B cell (primary cell): ENCODE measurements at regions of chr20 and their contacts with region 1.

Region 1: GRCh38 chr20:57622579-57623377 is 2.6 kb upstream of the ZBP1 start:
- DNase-seq: peak; percentile 69
- ATAC-seq: no peak
- H3K4me3 ChIP-seq: no peak overlapping the region
- H3K4me3 Mint-ChIP-seq: peak overlapping the region; percentile 13
- H3K27ac ChIP-seq: no peak overlapping the region
- H3K27ac Mint-ChIP-seq: peak overlapping the region; percentile 80
- H3K4me1 ChIP-seq: peaks cover 54 to 59% of the 10 kb centered on the region in 2 donors
- H3K4me1 Mint-ChIP-seq: peaks cover 65% of the 10 kb centered on the region
- H3K27me3 ChIP-seq: no peaks in the 10 kb centered on the region
- H3K27me3 Mint-ChIP-seq: no peaks in the 10 kb centered on the region
- CTCF ChIP-seq: peak; percentile 82

Region 2: GRCh38 chr20:57526885-57527458 is 95.8 kb before region 1 on chr20:
- CTCF ChIA-PET with region 1: no interaction called
- POLR2A ChIA-PET with region 1: no interaction called
- intact Hi-C with region 1: no loop called
- DNase-seq: no peak
- ATAC-seq: no peak
- H3K4me3 ChIP-seq: no peak overlapping the region
- H3K4me3 Mint-ChIP-seq: no peak overlapping the region
- H3K27ac ChIP-seq: no peak overlapping the region
- H3K27ac Mint-ChIP-seq: no peak overlapping the region
- H3K4me1 ChIP-seq: no peaks in the 10 kb centered on the region
- H3K4me1 Mint-ChIP-seq: no peaks in the 10 kb centered on the region
- H3K27me3 ChIP-seq: no peaks in the 10 kb centered on the region
- H3K27me3 Mint-ChIP-seq: peaks cover 3% of the 10 kb centered on the region
- CTCF ChIP-seq: no peak

Region 3: GRCh38 chr20:57611586-57612311 is 11.0 kb before region 1 on chr20:
- CTCF ChIA-PET with region 1: interaction called, 22 read pairs
- POLR2A ChIA-PET with region 1: interaction called, 3 read pairs
- intact Hi-C with region 1: no loop called
- DNase-seq: no peak
- ATAC-seq: no peak
- H3K4me3 ChIP-seq: no peak overlapping the region
- H3K4me3 Mint-ChIP-seq: no peak overlapping the region
- H3K27ac ChIP-seq: no peak overlapping the region
- H3K27ac Mint-ChIP-seq: no peak overlapping the region
- H3K4me1 ChIP-seq: peaks cover 5 to 15% of the 10 kb centered on the region in 2 donors
- H3K4me1 Mint-ChIP-seq: peaks cover 17% of the 10 kb centered on the region
- H3K27me3 ChIP-seq: no peaks in the 10 kb centered on the region
- H3K27me3 Mint-ChIP-seq: no peaks in the 10 kb centered on the region
- CTCF ChIP-seq: no peak

Region 4: DNA sequence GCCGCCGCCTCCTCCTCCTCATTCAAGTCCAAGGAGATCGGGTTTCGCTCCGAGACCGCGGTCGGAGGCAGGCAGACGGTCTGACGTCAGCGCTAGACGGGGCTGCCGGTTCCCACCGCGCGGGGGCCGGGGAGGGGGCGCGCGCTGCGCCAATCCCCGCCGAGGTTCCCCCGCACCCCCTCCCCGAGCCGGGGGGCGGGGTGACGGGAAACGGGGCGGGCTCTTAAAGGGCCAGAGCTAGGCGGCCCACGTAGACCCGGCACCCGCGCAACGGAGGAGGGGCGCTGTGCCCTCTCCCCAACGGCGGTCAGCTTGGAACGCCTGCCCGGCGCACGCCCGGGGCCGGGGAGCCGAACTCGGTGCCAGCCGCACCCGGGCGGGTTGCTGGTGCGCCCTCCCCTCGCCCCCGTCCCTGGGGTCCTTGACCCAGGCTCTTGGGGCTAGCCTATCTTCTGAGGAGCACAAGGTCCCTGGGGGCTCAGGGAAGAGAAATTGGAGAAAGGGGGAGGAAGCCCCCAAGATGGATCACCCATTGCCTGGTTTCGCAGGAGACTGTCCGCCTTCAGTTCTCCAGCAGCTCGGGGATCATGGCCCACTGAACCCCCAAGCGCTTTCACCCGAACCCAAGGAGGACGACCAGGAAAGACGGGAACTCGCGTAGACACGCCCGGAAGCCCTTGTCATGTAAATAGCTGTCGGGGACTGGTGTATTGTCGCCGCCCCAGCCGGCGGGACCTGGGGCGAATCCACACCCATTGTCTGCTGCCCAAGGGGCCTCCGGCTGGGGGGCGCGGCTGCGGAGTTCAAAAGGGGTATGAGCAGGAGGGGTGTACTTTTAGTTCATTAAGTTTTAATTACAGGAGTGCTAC is 87.4 kb after region 1 on chr20 and contains the start of gene PMEPA1:
- CTCF ChIA-PET with region 1: interaction called, 6 read pairs
- POLR2A ChIA-PET with region 1: interaction called, 6 read pairs
- intact Hi-C with region 1: loop called (anchors 1 kb)
- DNase-seq: peak; percentile 97
- ATAC-seq: peak; percentile 86
- H3K4me3 ChIP-seq: peak within 1 kb of the TSS; percentile 59 to 96 (median 83)
- H3K4me3 Mint-ChIP-seq: peak within 1 kb of the TSS; percentile 99
- H3K27ac ChIP-seq: peak within 1 kb of the TSS; percentile 80 to 99
- H3K27ac Mint-ChIP-seq: peak within 1 kb of the TSS; percentile 92
- H3K4me1 ChIP-seq: peaks cover 49 to 55% of the 10 kb centered on the region in 2 donors
- H3K4me1 Mint-ChIP-seq: peaks cover 53% of the 10 kb centered on the region
- H3K27me3 ChIP-seq: no peaks in the 10 kb centered on the region
- H3K27me3 Mint-ChIP-seq: no peaks in the 10 kb centered on the region
- CTCF ChIP-seq: no peak
- total RNA-seq, gene PMEPA1: 37.4 and 38.7 TPM in 2 replicates

Region 5: DNA sequence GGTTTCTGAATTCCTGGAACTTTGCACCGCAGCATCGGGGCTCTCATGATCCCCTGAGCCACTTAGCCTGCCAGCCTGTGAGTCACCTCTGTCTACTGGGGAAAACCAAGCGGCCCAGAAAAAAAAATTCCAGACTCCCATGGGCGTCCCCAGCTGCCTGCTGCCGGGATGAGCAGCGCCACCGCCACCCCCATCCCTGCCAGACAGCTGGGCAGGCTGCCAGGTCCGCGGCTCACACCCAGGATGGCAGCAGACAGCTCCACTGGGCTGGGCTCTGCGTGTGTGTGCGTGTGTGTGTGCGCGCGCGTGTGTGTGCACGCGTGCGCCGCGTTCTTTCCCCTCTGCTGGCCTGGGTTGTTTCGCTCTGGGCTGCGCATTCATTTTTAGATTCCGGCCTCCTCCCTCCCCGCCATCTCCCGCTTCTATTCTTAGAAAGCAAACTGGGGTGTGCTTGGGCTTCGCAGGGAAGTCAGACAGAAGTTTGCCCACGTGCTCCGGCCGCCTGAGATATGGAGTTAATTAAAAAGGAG is 125.9 kb after region 1 on chr20:
- CTCF ChIA-PET with region 1: no interaction called
- POLR2A ChIA-PET with region 1: no interaction called
- intact Hi-C with region 1: no loop called
- DNase-seq: peak; percentile 64
- ATAC-seq: peak; percentile 75
- H3K4me3 ChIP-seq: peak overlapping the region in 4 of 5 experiments; percentile 25 to 49 (median 40)
- H3K4me3 Mint-ChIP-seq: peak overlapping the region; percentile 89
- H3K27ac ChIP-seq: no peak overlapping the region
- H3K27ac Mint-ChIP-seq: no peak overlapping the region
- H3K4me1 ChIP-seq: peaks cover 13 to 19% of the 10 kb centered on the region in 2 donors
- H3K4me1 Mint-ChIP-seq: peaks cover 22% of the 10 kb centered on the region
- H3K27me3 ChIP-seq: peaks cover 0 to 40% (median 10%) of the 10 kb centered on the region in 4 experiments
- H3K27me3 Mint-ChIP-seq: peaks cover 47% of the 10 kb centered on the region
- CTCF ChIP-seq: no peak

Region 6: GRCh38 chr20:57818418-57819181 is 195.8 kb after region 1 on chr20:
- CTCF ChIA-PET with region 1: no interaction called
- POLR2A ChIA-PET with region 1: no interaction called
- intact Hi-C with region 1: no loop called
- DNase-seq: no peak
- ATAC-seq: no peak
- H3K4me3 ChIP-seq: no peak overlapping the region
- H3K4me3 Mint-ChIP-seq: no peak overlapping the region
- H3K27ac ChIP-seq: no peak overlapping the region
- H3K27ac Mint-ChIP-seq: no peak overlapping the region
- H3K4me1 ChIP-seq: no peaks in the 10 kb centered on the region
- H3K4me1 Mint-ChIP-seq: peaks cover 3% of the 10 kb centered on the region
- H3K27me3 ChIP-seq: peaks cover 0 to 9% (median 4%) of the 10 kb centered on the region in 4 experiments
- H3K27me3 Mint-ChIP-seq: peaks cover 39% of the 10 kb centered on the region
- CTCF ChIP-seq: no peak

Region 7: GRCh38 chr20:58087193-58087858 is 464.5 kb after region 1 on chr20:
- CTCF ChIA-PET with region 1: interaction called, 15 read pairs
- POLR2A ChIA-PET with region 1: no interaction called
- intact Hi-C with region 1: no loop called
- DNase-seq: peak; percentile 15
- ATAC-seq: no peak
- H3K4me3 ChIP-seq: no peak overlapping the region
- H3K4me3 Mint-ChIP-seq: no peak overlapping the region
- H3K27ac ChIP-seq: no peak overlapping the region
- H3K27ac Mint-ChIP-seq: no peak overlapping the region
- H3K4me1 ChIP-seq: no peaks in the 10 kb centered on the region
- H3K4me1 Mint-ChIP-seq: no peaks in the 10 kb centered on the region
- H3K27me3 ChIP-seq: no peaks in the 10 kb centered on the region
- H3K27me3 Mint-ChIP-seq: peaks cover 27% of the 10 kb centered on the region
- CTCF ChIP-seq: peak; percentile 53